Sciatic nerve (tissue), 2 donors: ENCODE measurements at regions of chr4 and their contacts with region 1.

Region 1: GRCh38 chr4:137968956-137969678 is 273.0 kb downstream of the SLC7A11 start:
- DNase-seq: no peak
- ATAC-seq: no peak

Region 2: DNA sequence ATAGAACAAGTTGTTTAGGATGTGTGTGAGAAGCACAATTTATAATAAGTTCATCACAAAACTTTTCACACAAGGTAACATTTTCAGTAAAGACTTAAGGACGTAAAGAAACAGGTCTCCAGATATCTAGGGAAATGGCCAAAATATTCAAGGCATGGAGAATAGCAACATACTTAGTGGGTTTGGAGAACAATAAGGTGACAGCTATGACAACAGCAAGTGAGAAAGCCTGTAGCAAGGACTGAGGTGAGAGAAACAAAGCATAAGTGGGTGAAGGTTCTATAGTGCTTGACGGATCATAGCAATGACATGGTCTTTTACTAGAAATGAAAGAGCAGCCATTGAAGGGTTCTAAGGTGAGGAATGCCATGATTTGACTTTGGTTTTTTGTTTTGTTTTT is 1774.2 kb before region 1 on chr4:
- intact Hi-C with region 1: no loop called
- DNase-seq: no peak
- ATAC-seq: no peak

Region 3: GRCh38 chr4:136392576-136392975 is 1576.5 kb before region 1 on chr4:
- intact Hi-C with region 1: loop called (anchors 5 kb)
- DNase-seq: no peak
- ATAC-seq: no peak